ENCODE measurements at regions of chr1 and their contacts with region 1.

Region 1: DNA sequence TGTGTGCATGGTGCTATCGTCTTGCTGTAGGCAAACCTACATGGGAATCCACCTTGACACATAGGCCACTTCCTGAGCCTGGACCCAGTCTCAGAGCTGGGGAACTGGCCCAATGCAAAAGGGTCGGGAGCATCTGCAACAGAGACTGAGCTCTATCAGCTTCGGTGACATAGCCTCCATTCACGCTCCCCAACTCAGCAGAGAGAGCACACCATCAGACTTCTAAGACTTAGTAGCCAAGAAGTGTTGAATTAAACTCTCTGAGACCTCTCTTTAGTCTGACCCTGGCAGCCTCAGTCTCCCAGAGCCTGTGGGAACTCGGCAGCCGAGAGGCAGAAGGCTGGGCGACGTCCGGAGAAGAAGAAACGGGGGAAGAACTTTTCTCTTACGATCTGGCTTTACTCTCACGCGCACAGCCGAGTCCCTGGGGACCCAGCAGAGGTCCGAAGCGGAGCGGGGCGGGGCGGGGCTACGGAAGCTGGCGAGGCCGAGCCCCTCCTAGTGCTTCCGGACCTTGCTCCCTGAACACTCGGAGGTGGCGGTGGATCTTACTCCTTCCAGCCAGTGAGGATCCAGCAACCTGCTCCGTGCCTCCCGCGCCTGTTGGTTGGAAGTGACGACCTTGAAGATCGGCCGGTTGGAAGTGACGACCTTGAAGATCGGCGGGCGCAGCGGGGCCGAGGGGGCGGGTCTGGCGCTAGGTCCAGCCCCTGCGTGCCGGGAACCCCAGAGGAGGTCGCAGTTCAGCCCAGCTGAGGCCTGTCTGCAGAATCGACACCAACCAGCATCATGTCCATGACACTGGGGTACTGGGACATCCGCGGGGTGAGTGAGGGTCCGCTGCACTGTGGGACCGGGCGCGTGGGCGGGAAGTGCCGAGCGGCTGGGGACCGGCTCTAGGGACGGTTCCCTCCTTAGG is at the start of gene GSTM4:
- DNase-seq: peak; percentile 38
- H3K4me3 ChIP-seq: peak within 1 kb of the TSS; percentile 64 to 70 (median 68)
- H3K27ac ChIP-seq: no peak within 1 kb of the TSS
- H3K4me1 ChIP-seq: peaks cover 9% of the 10 kb centered on the region
- H3K27me3 ChIP-seq: peaks cover 5% of the 10 kb centered on the region
- CTCF ChIP-seq: peak in 1 of 2 donors; percentile 19
- total RNA-seq, gene GSTM4: 5.0 to 5.8 TPM

Region 2: GRCh38 chr1:109643385-109644230 is 12.3 kb before region 1 on chr1:
- CTCF ChIA-PET with region 1: interaction called, 10 read pairs
- dilution Hi-C with region 1: no loop called
- in situ Hi-C with region 1: no loop called
- intact Hi-C with region 1: no loop called
- DNase-seq: peak; percentile 51
- H3K4me3 ChIP-seq: no peak overlapping the region
- H3K27ac ChIP-seq: no peak overlapping the region
- H3K4me1 ChIP-seq: no peaks in the 10 kb centered on the region
- H3K27me3 ChIP-seq: no peaks in the 10 kb centered on the region
- CTCF ChIP-seq: peak; percentile 77 to 94

Region 3: GRCh38 chr1:109704173-109704572 is 48.3 kb after region 1 on chr1:
- CTCF ChIA-PET with region 1: no interaction called
- dilution Hi-C with region 1: no loop called
- in situ Hi-C with region 1: loop called in 1 of 2 experiments (anchors 10 kb)
- intact Hi-C with region 1: no loop called
- DNase-seq: no peak
- H3K4me3 ChIP-seq: no peak overlapping the region
- H3K27ac ChIP-seq: no peak overlapping the region
- H3K4me1 ChIP-seq: no peaks in the 10 kb centered on the region
- H3K27me3 ChIP-seq: no peaks in the 10 kb centered on the region
- CTCF ChIP-seq: no peak

Measured in mammary epithelial cell (primary cell).